ENCODE measurements at regions of chr12 and their contacts with region 1.

Region 1: DNA sequence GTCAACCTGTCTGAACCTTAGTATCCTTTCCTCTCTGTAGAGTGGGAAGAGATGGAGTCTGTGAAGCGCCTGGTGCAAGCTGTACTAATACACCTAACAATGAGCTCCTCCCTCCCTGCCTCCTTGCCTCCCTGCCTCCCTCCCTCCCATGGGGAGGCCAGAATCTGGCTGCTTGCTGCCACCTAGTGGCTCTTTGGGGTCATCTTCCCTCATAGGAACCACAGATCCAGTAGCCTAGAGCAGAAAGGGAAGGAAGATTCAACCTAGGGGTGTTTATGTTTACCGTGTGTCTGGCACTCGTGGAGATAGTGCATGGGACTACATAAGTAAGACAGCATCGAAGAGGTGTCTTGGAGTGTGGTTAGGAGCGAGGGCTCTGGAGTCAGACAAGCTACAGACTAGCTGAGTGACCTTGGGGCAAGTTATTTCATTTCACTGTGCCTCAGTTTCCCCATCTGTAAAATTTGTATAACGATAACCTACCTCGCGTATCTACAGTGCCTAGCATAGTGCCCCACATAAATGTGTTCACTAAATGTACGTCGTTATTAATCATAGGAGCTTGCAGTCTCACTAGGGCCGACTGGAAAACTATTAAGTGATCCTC is 35.5 kb upstream of the TSPAN9 start:
- DNase-seq: peak; percentile 76
- ATAC-seq: peak; percentile 68
- H3K4me3 Mint-ChIP-seq: no peak overlapping the region
- H3K27ac Mint-ChIP-seq: 0 out of 2 replicates have a peak overlapping the region, but pooled peaks have one; percentile 19
- H3K4me1 Mint-ChIP-seq: peaks cover 4% of the 10 kb centered on the region; the same call in 1 of the 2 replicates
- H3K27me3 Mint-ChIP-seq: no peaks in the 10 kb centered on the region
- CTCF ChIP-seq: peak; percentile 62; the same call in 1 of the 2 replicates

Region 2: GRCh38 chr12:2884810-2885209 is 156.9 kb before region 1 on chr12:
- CTCF ChIA-PET with region 1: interaction called, 19 read pairs
- POLR2A ChIA-PET with region 1: interaction called, 3 read pairs
- DNase-seq: no peak
- ATAC-seq: no peak
- H3K4me3 Mint-ChIP-seq: no peak overlapping the region
- H3K27ac Mint-ChIP-seq: peak overlapping the region; percentile 91
- H3K4me1 Mint-ChIP-seq: peaks cover 12% of the 10 kb centered on the region
- H3K27me3 Mint-ChIP-seq: no peaks in the 10 kb centered on the region
- CTCF ChIP-seq: no peak

Region 3: DNA sequence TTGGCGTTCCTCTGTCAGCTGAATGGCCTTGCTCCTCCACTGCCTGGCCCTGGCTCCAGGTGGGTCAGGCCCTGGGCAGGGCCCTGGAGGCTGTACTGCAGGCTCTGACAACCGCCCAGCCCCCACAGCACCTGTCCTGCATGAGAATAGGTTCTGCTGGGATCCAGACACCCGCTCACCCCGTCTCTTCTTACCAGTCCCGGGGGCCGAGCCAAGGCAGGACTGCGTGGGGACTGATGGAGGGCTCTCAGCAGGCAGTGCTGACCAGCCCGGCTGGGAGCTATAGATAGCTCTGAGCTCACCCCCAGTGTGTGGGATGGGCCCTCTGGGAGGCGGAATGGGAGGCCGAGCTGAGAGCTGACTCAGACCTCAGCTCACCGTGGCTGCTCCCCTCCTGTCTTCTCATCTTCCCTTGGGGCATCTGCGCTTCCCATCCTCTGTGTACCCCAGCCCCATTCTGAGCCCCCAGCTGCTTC is 42.8 kb before region 1 on chr12:
- CTCF ChIA-PET with region 1: interaction called, 12 read pairs
- POLR2A ChIA-PET with region 1: no interaction called
- DNase-seq: peak; percentile 68
- ATAC-seq: peak; percentile 75
- H3K4me3 Mint-ChIP-seq: peak overlapping the region; percentile 40
- H3K27ac Mint-ChIP-seq: peak overlapping the region; percentile 92
- H3K4me1 Mint-ChIP-seq: peaks cover 49% of the 10 kb centered on the region
- H3K27me3 Mint-ChIP-seq: no peaks in the 10 kb centered on the region
- CTCF ChIP-seq: no peak

Region 4: DNA sequence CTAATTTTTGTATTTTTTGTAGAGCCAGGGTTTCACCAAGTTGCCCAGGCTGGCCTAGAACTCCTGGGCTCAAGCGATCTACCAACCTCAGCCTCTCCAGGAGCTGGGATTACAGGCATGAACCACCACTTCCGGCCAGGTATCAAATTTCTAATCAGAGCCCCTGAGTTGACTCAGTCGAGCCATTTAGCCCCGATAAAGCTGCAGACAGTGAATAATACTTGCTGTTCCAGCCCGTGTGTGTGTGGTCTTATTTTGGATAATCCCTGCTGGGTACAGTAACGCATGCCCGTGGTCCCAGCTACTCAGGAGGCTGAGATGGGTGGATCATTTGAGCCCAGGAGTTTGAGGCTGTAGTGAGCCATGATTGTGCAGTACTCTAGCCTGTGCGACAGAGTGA is 25.5 kb before region 1 on chr12:
- CTCF ChIA-PET with region 1: interaction called, 19 read pairs
- POLR2A ChIA-PET with region 1: interaction called, 7 read pairs
- DNase-seq: no peak
- ATAC-seq: no peak
- H3K4me3 Mint-ChIP-seq: no peak overlapping the region
- H3K27ac Mint-ChIP-seq: no peak overlapping the region
- H3K4me1 Mint-ChIP-seq: 0 out of 2 replicates have a peak, but pooled peaks cover 3% of the 10 kb centered on the region
- H3K27me3 Mint-ChIP-seq: no peaks in the 10 kb centered on the region
- CTCF ChIP-seq: no peak

Region 5: GRCh38 chr12:3073438-3074250 is 32.0 kb after region 1 on chr12:
- CTCF ChIA-PET with region 1: interaction called, 15 read pairs
- POLR2A ChIA-PET with region 1: no interaction called
- DNase-seq: peak; percentile 92
- ATAC-seq: peak; percentile 48
- H3K4me3 Mint-ChIP-seq: no peak overlapping the region
- H3K27ac Mint-ChIP-seq: no peak overlapping the region
- H3K4me1 Mint-ChIP-seq: peaks cover 8% of the 10 kb centered on the region
- H3K27me3 Mint-ChIP-seq: peaks cover 19% of the 10 kb centered on the region
- CTCF ChIP-seq: peak; percentile 90

Region 6: GRCh38 chr12:3418609-3419390 is 377.1 kb after region 1 on chr12:
- CTCF ChIA-PET with region 1: no interaction called
- POLR2A ChIA-PET with region 1: no interaction called
- DNase-seq: no peak
- ATAC-seq: no peak
- H3K4me3 Mint-ChIP-seq: no peak overlapping the region
- H3K27ac Mint-ChIP-seq: no peak overlapping the region
- H3K4me1 Mint-ChIP-seq: peaks cover 27% of the 10 kb centered on the region
- H3K27me3 Mint-ChIP-seq: peaks cover 39% of the 10 kb centered on the region
- CTCF ChIP-seq: no peak